ENCODE measurements at regions of chr18 and their contacts with region 1.

Region 1: GRCh38 chr18:23460285-23461273 is 7.5 kb downstream of the RIOK3 start:
- DNase-seq: no peak
- ATAC-seq: no peak
- H3K4me3 Mint-ChIP-seq: no peak overlapping the region
- H3K27ac Mint-ChIP-seq: no peak overlapping the region
- H3K4me1 Mint-ChIP-seq: peaks cover 59% of the 10 kb centered on the region
- H3K27me3 Mint-ChIP-seq: no peaks in the 10 kb centered on the region
- CTCF ChIP-seq: no peak

Region 2: DNA sequence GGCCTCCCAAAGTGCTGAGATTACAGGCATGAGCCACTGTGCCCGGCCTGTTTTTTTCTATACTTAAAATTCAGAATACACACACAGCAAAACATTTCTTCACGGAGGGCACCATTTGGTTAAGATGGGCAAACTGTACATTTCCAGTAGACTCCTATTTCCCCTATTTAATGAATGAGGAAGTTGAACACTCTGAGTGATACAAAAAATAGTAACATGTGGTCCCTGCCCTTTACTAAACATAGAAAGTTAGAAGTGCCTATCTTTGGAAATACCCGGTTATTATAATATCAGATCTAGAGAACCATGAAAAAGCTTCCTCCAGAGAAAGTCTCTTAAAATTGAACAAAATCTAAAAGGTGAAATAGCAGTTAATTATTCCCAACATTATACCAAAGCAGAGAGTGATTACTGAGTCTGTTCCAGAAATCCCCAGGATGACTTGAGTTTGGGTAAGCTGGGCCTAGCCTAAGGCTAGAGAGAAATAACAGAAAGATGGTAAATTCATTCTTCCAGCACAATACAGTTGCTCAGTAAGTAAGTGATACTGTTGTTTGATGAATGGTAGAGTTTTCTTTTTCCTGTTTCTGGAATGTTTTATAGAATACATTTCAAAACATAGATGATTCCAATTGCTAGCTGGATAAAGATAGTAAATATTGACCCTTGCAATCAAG is 19.4 kb after region 1 on chr18:
- CTCF ChIA-PET with region 1: no interaction called
- POLR2A ChIA-PET with region 1: no interaction called
- intact Hi-C with region 1: loop called (anchors 2 kb)
- DNase-seq: no peak
- ATAC-seq: peak; percentile 91
- H3K4me3 Mint-ChIP-seq: peak overlapping the region; percentile 59
- H3K27ac Mint-ChIP-seq: peak overlapping the region; percentile 93
- H3K4me1 Mint-ChIP-seq: peaks cover 62% of the 10 kb centered on the region
- H3K27me3 Mint-ChIP-seq: no peaks in the 10 kb centered on the region
- CTCF ChIP-seq: no peak

Measured in activated B cell treated with CpG ODN at 0.5 μM for 24 hours (primary cell).